ENCODE measurements at regions of chr15 and their contacts with region 1.

Region 1: DNA sequence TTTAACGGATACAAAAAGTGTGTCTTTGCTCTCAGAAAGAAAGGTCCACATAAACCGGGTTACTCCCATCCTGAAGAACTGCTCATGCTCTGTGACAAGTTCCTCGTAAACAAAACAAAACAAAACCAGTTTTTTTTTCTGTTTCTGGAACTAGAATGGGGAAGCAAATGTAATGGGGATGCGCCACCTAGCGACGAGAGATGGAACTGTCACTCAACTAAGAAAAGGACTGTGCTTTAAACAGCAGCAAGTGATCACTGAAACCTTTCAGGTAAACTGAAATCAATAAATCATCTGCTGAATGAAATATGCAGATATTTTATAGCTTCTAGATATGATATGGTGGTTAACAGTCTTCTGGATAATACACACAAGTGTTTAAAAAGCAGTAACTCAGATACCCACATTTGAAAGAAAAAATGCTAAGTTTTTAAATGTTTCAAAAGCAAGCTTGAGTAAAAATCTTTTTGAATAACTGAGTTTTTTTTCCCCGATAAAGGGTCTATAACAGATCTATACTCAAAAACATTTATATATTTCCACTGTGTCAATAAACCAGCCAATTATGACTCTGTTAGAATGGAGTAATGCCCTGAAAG is 10.9 kb downstream of the TM2D3 start:
- DNase-seq: peak; percentile 78
- ATAC-seq: peak; percentile 68

Region 2: DNA sequence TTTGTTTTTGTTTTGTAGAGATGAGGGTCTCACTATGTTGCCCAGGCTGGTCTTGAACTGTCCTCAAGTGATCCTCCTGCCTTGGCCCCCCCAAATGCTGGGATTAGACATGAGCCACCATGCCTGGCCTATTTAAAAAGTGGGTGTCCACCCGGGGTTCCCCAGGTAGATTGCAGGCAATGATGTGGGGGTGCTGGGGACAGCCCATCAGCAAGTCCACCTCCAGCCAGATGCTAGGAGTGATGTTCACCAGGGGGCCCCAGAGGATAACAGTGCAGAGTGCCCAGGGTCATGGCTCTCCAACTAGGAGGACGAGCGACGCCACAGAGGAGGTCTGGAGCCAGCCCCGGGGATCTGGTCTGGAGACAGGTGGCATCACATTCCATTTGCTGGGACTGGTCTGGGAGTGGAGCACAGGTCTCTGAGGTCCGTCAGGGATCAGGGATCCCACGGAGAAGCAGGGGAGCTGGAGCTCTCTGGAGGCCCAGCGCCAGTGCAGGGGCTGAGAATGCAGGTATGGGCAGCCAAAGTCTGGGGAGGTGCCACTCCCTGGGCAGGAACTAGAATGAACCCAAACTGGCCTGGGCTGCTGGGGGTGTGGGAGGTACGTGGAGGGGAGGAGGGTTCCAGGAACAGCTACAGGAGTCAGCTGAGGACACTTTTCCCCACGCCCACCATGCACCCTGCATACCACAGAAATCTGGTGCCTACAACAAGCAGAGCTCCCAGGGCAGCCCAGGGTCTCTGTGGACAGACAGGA is 100.6 kb before region 1 on chr15:
- intact Hi-C with region 1: loop called (anchors 5 kb)
- DNase-seq: no peak
- ATAC-seq: peak; percentile 70

Measured in Right ventricle myocardium superior (tissue), 1 donor.